GM13977 (cell line): ENCODE measurements at regions of chr4 and their contacts with region 1.

Region 1: GRCh38 chr4:150867148-150867547 is 147.9 kb downstream of the LRBA start:
- DNase-seq: peak; percentile 66
- CTCF ChIP-seq: peak; percentile 48

Region 2: GRCh38 chr4:149980941-149981340 is 886.2 kb before region 1 on chr4:
- in situ Hi-C with region 1: loop called (anchors 25 kb)
- DNase-seq: peak; percentile 28
- CTCF ChIP-seq: peak; percentile 74

Region 3: DNA sequence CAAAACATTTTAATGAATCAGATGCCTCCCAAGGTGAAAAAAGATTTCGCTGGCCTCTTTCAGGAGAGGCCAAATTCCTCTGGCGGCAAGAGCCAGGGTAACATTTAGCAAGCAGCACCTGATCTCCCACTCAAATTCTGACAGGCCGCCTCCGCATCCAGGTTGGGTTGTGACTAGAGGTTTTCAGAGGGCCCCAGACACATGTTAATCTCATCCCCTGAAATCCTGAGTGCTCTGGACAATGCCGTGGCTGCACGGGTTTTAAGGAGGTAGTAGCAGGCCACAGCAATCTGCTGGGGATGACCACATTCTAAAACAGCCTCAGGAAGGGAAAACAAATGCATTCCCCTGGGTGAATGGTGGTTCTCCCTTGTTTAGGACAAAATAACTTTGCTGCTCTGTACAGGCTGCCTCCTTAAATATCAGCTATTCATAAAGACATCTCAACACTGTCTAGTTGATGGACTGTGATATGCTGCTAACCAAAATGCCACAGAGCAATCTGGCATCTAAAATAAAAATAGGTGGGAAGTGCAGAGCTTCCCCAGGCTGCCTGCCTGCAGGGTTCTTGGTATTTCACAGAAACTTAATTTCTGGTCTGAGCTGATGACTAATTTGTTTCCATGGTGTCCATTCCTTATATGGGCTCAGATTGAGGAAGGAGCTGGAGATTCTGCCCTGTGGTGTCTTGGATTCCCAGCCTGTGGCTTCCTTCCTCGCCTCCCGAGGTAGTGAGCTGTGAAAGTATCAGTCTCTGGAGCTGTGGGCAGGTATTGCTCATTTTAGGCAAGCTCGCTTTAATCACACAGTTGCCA is 586.9 kb before region 1 on chr4:
- in situ Hi-C with region 1: loop called (anchors 10 kb)
- DNase-seq: no peak
- CTCF ChIP-seq: no peak

Region 4: DNA sequence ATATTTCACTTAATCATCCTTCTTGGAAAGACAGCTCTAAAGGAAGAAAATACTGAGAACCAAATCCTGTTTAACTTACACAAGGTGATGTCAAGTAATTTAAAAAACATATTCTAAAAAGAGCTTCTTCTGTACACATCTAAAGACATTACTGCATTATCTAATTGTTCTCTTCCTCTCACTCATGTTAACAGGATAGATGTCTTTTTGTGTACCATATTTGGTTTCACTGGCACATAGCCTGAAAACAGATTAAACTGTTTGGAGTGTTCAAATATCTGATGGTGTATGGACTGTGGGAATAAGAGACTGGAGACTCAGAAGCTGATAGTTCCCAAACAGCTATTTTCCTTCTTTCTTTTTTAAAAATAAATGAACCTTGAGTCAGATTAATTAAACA is 498.5 kb before region 1 on chr4:
- in situ Hi-C with region 1: no loop called
- DNase-seq: no peak
- CTCF ChIP-seq: no peak

Region 5: GRCh38 chr4:150641612-150642011 is 225.5 kb before region 1 on chr4:
- in situ Hi-C with region 1: no loop called
- DNase-seq: no peak
- CTCF ChIP-seq: no peak

Region 6: DNA sequence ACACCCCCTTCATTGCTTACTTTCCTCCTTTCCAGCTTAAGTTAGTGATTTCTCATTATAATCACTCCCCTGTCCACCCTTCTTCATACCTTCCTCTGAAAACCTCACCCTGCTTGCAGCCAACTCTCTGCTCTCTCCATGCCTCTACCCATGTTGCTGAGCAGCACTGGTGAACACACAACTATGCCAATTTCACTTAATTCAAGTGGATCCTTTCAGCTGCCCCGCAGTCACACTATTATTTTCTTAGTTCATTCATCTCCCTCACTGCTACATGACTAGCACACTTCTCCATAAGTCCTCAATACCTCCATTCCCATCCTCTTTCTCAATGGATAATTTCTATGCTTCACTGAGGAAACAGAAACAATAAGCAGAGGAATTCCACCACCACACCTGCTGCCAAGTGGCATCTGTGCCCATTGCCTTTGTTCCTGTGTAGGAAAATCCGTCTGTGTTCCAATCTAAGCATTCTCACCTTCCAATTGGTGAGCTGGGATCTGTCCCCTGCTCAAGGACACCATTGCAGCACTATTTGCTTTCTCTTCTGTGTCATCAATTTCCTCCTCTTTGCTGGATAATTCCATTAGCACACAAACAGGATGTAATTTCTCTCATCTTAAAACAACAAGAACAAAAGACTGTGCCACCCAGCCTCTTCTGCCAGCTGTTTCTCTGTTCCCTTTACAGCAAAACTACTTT is 384.6 kb after region 1 on chr4:
- in situ Hi-C with region 1: no loop called
- DNase-seq: no peak
- CTCF ChIP-seq: no peak